ENCODE measurements at regions of chr13 and their contacts with region 1.

Region 1: GRCh38 chr13:70723732-70724131 is 615.5 kb upstream of the KLHL1 start:
- DNase-seq: no peak
- ATAC-seq: no peak
- H3K4me3 ChIP-seq: no peak overlapping the region
- H3K27ac ChIP-seq: no peak overlapping the region
- H3K4me1 ChIP-seq: no peaks in the 10 kb centered on the region
- H3K27me3 ChIP-seq: no peaks in the 10 kb centered on the region
- CTCF ChIP-seq: no peak
- POLR2A ChIP-seq: no peak

Region 2: DNA sequence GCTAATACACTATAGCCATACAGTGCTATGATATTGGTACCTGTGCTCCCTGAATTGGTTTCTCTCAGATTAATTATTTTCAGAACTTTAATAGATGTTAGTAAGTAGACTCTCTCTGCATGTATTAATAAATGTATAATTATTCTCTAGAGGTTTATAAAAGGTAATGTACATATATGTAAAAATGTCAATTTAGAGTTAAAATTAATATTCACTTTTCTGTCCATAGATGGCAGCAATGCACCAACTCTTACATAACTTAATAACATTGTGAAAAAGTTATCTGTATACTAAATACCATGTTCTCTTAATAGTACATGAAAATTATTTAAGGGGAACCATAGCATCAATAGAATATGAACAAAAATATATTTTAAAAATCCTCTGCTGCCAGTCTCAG is 100.5 kb before region 1 on chr13:
- in situ Hi-C with region 1: loop called in 1 of 4 experiments (anchors 25 kb)
- intact Hi-C with region 1: no loop called
- DNase-seq: no peak
- ATAC-seq: no peak
- H3K4me3 ChIP-seq: no peak overlapping the region
- H3K27ac ChIP-seq: no peak overlapping the region
- H3K4me1 ChIP-seq: no peaks in the 10 kb centered on the region
- H3K27me3 ChIP-seq: no peaks in the 10 kb centered on the region
- CTCF ChIP-seq: peak in 1 of 5 experiments; percentile 22
- POLR2A ChIP-seq: no peak

Measured in gastrocnemius medialis (tissue), 4 donors.